Breast epithelium (tissue), 4 donors: ENCODE measurements at regions of chr3 and their contacts with region 1.

Region 1: DNA sequence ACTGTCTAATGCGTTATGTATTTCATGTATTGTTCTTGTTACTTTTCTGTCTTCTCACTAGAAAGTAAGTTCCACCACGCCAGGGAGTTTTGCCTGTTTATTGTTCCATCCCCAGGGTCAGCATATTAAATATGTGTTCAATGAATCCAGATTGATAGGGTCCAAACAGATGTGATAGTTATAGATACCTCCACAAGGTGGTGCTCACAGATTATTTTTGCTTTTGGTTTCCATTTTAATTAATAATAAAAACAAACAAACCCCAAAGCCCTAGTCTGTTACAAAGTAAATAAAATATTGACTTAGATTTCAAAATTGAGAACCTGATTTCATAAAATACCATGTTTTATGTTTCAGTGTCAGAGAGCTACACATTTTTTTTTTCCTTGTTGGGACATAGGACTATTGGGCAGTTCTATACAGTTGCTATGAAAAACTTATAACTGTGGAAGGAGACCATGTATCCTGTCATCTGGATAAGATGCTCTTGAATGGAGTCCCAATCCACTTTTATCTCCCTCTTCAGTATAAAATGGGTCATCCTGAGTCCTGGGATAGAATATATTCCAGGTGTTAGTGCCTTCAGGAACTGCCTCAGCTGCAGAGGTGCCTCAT is 12.4 kb downstream of the OTOL1 start:
- DNase-seq: no peak
- H3K4me3 ChIP-seq: no peak overlapping the region
- H3K27ac ChIP-seq: no peak overlapping the region
- H3K4me1 ChIP-seq: no peaks in the 10 kb centered on the region
- H3K27me3 ChIP-seq: no peaks in the 10 kb centered on the region
- CTCF ChIP-seq: no peak
- POLR2A ChIP-seq: no peak

Region 2: DNA sequence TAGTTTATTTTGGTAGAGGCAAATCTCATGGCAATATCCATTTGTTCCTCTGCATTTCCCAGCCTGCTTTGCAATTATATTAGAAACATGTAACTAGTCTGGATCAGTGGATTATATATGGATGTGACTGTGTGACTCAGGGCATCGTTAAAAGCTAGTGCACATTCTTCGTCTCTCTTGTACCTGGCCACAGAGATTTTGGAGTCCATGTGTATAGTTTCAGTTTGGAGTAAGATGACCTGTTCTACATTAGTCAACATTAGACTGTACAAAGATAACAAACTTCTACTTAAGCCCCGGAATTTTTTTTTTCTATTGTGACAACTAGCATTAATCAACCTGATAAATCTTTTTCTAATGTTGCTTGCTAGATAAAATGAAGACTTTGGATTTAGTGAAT is 299.4 kb after region 1 on chr3:
- intact Hi-C with region 1: no loop called
- DNase-seq: no peak
- H3K4me3 ChIP-seq: no peak overlapping the region
- H3K27ac ChIP-seq: no peak overlapping the region
- H3K4me1 ChIP-seq: no peaks in the 10 kb centered on the region
- H3K27me3 ChIP-seq: no peaks in the 10 kb centered on the region
- CTCF ChIP-seq: no peak
- POLR2A ChIP-seq: no peak

Region 3: DNA sequence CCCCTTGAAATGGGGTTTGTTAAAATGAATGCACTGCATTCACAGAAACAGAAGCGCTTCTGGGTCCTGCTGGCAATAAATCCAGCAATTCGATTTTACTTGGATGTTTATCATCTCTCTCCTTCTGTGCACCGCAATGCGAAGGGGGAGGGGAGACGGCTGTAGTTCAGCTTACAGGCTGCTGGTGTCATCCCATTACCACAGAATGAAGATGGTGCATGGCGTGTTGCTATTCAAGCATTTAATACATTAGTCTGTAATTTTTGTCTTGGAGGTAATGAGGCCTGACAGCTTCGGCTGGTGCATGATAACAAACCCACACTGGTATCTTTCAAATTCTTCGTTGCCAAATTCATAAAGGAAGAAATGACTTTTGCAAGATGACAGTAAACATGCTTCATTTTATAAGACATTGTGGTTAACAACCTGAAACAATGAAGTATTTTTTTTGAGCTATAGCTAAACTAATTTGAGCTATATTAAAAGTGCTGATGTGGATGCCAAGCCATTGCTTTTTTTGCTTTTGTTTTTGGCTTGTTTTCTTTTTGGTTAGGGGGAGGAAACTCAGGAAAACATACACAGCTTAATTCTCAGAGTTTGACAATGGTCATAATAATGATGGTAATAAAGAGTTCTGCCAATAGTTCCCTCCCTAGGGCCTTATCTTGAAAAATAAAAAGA is 405.9 kb after region 1 on chr3:
- intact Hi-C with region 1: no loop called
- DNase-seq: no peak
- H3K4me3 ChIP-seq: no peak overlapping the region
- H3K27ac ChIP-seq: no peak overlapping the region
- H3K4me1 ChIP-seq: no peaks in the 10 kb centered on the region
- H3K27me3 ChIP-seq: no peaks in the 10 kb centered on the region
- CTCF ChIP-seq: no peak
- POLR2A ChIP-seq: no peak

Region 4: GRCh38 chr3:162285259-162285658 is 776.3 kb after region 1 on chr3:
- intact Hi-C with region 1: loop called (anchors 5 kb)
- DNase-seq: no peak
- H3K4me3 ChIP-seq: no peak overlapping the region
- H3K27ac ChIP-seq: no peak overlapping the region
- H3K4me1 ChIP-seq: no peaks in the 10 kb centered on the region
- H3K27me3 ChIP-seq: no peaks in the 10 kb centered on the region
- CTCF ChIP-seq: no peak
- POLR2A ChIP-seq: no peak